ENCODE measurements at regions of chr2 and their contacts with region 1.

Region 1: GRCh38 chr2:10434886-10435819 is 13.0 kb downstream of the ODC1 start:
- DNase-seq: no peak
- H3K4me3 ChIP-seq: no peak overlapping the region
- H3K27ac ChIP-seq: no peak overlapping the region
- H3K4me1 ChIP-seq: peaks cover 0 to 23% (median 11%) of the 10 kb centered on the region in 3 donors
- H3K27me3 ChIP-seq: peaks cover 0 to 17% (median 0%) of the 10 kb centered on the region in 4 donors
- CTCF ChIP-seq: peak; percentile 93 to 97 (median 96)
- POLR2A ChIP-seq: no peak

Region 2: GRCh38 chr2:10072656-10073480 is 362.3 kb before region 1 on chr2:
- intact Hi-C with region 1: loop called (anchors 10 kb)
- DNase-seq: no peak
- H3K4me3 ChIP-seq: no peak overlapping the region
- H3K27ac ChIP-seq: no peak overlapping the region
- H3K4me1 ChIP-seq: peaks cover 0 to 10% (median 0%) of the 10 kb centered on the region in 3 donors
- H3K27me3 ChIP-seq: peaks cover 0 to 49% (median 0%) of the 10 kb centered on the region in 4 donors
- CTCF ChIP-seq: peak; percentile 83 to 92 (median 90)
- POLR2A ChIP-seq: no peak

Region 3: GRCh38 chr2:10124538-10125045 is 310.6 kb before region 1 on chr2:
- intact Hi-C with region 1: loop called (anchors 5 kb)
- DNase-seq: no peak
- H3K4me3 ChIP-seq: peak overlapping the region in 2 of 4 donors; percentile 35 to 72
- H3K27ac ChIP-seq: no peak overlapping the region
- H3K4me1 ChIP-seq: peaks cover 25 to 63% (median 36%) of the 10 kb centered on the region in 3 donors
- H3K27me3 ChIP-seq: peaks cover 0 to 19% (median 4%) of the 10 kb centered on the region in 4 donors
- CTCF ChIP-seq: peak; percentile 31 to 77 (median 69)
- POLR2A ChIP-seq: no peak